Sciatic nerve (tissue), 2 donors: ENCODE measurements at regions of chr13 and their contacts with region 1.

Region 1: DNA sequence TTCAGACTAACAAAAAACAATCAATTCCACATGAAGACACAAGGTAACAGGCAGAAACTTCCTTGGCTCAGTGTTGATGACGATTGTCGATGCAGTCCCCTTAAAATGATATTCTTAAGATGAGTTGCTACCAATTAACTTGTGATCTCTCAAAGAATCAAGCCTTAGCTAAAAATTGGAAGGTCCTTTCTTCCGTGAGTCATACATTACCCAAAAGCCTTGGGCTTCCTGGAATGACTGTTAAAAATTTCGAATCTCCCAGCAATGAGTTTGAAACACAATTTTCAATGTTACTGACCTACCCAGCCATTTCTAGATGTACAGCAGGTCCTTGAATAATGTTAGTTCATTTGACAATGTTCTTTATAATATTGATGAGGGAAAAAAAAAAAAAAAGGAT is 28.0 kb upstream of the RB1 start:
- DNase-seq: no peak
- ATAC-seq: no peak

Region 2: GRCh38 chr13:48488995-48489394 is 213.5 kb after region 1 on chr13:
- intact Hi-C with region 1: loop called (anchors 5 kb)
- DNase-seq: no peak
- ATAC-seq: no peak

Region 3: DNA sequence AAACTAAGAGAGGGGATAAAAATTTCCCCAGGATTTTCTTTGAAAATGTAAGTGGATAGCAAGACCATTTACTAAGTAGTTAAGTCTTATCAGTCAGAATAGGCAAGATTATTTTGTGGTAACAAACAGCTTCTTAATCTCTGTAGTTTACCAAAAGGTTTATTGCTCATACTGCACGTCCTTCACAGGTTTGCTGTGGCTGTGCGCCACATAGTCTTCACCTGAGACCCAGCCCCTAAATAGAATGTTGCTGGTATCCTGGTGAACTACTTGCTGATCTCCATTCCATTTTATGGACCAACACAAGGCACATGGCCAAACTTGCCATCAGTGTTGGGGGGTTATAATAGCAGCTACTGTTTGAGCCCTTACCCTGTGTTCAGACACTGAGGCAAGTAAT is 744.8 kb after region 1 on chr13:
- intact Hi-C with region 1: no loop called
- DNase-seq: no peak
- ATAC-seq: no peak